OCI-LY7 (cell line): ENCODE measurements at regions of chrX and their contacts with region 1.

Region 1: DNA sequence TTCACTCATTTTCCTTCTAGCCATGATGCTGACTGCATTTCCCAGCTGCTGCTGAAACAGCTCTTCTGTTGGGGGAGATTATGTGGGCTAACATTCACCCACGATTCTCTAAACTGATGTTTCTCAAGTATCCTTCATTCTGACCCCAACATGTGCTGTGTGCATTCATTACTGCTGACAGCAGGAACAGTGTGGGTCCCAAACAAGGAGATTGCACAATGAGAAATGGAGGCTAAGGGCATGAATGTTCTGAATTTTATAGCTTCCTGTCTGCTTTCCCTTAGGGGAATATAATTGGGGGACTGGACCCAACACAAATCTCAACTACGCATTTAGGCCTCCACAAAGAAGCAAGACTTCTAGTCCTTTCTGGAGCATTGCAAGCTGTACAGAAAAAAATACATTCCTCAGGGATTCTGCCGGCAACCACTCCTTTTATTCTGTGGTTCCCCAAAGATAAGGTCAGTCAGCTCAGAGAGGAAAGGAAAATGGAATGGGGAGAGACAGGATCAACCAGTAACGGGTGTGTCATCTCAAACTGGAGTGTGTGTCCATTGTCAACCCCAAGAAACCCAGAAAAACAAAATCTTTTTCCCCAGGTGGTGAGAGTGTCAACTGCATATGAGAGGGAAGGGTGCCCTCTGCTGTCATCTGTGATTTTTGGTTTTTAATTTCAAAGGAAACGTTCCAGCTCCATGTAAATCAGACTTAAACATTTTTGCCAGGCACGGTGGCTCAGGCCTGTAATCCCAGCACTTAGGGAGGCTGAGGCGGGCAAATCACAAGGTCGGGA is 81.5 kb upstream of the EGFL6 start:
- DNase-seq: peak; percentile 73
- H3K4me3 ChIP-seq: peak overlapping the region; percentile 49
- H3K27ac ChIP-seq: peak overlapping the region; percentile 63
- H3K4me1 ChIP-seq: peaks cover 23% of the 10 kb centered on the region
- CTCF ChIP-seq: peak; percentile 74

Region 2: DNA sequence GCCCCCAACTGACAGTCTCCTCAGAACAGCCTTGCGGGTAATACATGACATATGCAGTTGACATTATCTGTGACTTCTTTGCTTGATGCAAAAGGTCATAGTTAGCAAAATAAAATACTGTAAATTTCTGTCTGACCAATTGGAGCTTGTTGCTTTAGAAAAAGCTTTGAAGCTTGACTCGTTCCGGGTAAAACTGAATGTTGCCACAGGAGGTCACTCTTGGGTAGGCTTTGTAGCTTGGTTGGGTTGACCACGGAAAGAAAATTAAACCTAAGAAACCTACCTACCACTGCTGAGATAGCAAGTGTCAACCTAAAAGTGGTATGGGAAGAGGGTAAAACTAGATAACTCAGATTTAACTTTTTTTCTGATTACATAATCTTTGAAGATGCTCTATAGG is 673.5 kb before region 1 on chrX:
- CTCF ChIA-PET with region 1: no interaction called
- POLR2A ChIA-PET with region 1: no interaction called
- intact Hi-C with region 1: loop called (anchors 10 kb)
- DNase-seq: peak; percentile 69
- H3K4me3 ChIP-seq: no peak overlapping the region
- H3K27ac ChIP-seq: no peak overlapping the region
- H3K4me1 ChIP-seq: peaks cover 7% of the 10 kb centered on the region
- CTCF ChIP-seq: peak; percentile 79

Region 3: DNA sequence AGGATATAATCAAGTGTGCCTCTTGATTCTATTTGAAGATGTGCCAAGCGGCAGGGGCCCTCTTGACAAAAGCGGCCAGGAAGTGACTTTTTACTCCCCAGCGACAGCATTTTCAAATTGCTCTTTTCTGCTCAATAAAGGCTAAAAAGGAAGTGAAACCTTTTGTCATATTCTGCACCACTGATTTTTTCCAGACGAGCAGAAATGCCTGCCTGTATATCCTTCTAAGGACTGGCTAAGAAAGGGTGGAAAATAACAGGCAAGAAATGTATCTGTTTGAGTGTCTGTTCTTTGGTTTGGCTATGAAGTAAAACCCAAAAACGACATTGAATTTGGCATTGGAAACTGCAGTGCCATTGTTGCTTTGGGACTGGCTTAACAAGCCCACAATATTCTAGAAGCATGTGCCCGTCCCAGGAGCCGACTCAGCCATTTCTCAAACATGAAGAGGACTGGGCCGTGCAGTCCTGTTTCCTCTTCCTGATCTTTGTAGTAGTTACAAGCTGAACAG is 487.6 kb before region 1 on chrX:
- CTCF ChIA-PET with region 1: no interaction called
- POLR2A ChIA-PET with region 1: interaction called, 3 read pairs
- intact Hi-C with region 1: loop called (anchors 5 kb)
- DNase-seq: peak; percentile 80
- H3K4me3 ChIP-seq: peak overlapping the region; percentile 62
- H3K27ac ChIP-seq: peak overlapping the region; percentile 83
- H3K4me1 ChIP-seq: peaks cover 64% of the 10 kb centered on the region
- CTCF ChIP-seq: no peak

Region 4: DNA sequence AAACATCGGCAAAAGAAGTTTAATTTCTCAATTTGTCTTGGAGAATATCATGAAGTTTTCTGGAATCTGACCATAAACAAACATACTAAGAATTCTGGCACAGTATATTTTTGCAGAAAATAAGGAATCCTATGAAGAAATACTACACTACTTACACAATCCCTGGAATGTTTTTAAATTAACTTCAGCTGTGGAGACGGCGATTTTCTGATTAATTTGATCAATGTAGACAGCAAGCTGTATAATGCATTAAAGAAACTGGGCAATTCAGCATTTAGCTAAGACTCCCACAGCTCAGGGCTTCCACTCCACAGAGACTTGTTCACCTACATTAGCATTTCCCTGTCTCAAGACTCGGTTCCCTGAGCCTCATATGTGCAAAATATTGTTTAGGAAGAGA is 93.6 kb after region 1 on chrX:
- CTCF ChIA-PET with region 1: no interaction called
- POLR2A ChIA-PET with region 1: no interaction called
- intact Hi-C with region 1: no loop called
- DNase-seq: no peak
- H3K4me3 ChIP-seq: no peak overlapping the region
- H3K27ac ChIP-seq: no peak overlapping the region
- H3K4me1 ChIP-seq: no peaks in the 10 kb centered on the region
- CTCF ChIP-seq: no peak